PC-9 (cell line): ENCODE measurements at regions of chr7 and their contacts with region 1.

Region 1: GRCh38 chr7:130758429-130759056 is 24.5 kb upstream of the KLF14 start:
- DNase-seq: peak in 1 of 2 experiments; percentile 50
- H3K4me3 ChIP-seq: no peak overlapping the region
- H3K27ac ChIP-seq: no peak overlapping the region
- H3K4me1 ChIP-seq: no peaks in the 10 kb centered on the region
- H3K27me3 ChIP-seq: no peaks in the 10 kb centered on the region
- CTCF ChIP-seq: peak; percentile 95

Region 2: DNA sequence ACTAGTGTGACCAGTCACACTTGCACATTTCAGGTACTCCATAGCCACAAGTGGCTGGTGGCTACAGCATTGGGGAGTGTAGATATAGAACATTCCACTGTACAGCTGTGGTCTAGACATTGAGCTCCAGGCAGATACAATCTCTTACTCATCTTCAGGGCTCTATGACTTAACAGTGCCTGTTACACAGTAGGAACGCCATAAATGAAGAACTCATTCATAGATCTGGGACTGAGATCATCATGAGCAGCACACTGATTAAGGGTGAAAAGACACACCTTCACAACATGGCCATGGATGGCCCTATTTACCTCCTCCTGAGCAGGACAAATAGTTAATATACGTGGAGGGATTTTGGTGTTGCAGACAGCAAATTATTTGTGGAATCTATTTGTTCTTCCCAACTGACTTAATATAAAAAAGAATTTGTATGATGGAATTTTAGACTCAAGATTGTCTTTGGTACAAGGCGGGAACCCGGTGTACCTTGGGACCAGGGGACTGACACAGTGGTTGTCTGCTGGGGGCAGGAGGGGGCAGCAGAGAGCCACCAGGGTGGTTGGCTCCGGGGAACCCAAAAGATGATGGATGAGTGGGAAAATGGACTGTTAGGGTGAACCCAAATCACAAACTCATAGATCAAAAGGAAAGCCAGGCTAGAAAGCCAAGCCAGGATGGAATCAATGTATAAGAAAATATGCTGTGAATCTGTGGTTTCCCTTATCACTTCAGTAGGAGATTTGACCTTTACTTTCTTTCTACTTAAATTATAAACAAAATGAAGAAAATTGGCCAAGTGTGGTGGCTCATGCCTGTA is 516.1 kb before region 1 on chr7:
- CTCF ChIA-PET with region 1: no interaction called
- POLR2A ChIA-PET with region 1: no interaction called
- intact Hi-C with region 1: loop called (anchors 5 kb)
- DNase-seq: peak; percentile 38 to 48
- H3K4me3 ChIP-seq: no peak overlapping the region
- H3K27ac ChIP-seq: no peak overlapping the region
- H3K4me1 ChIP-seq: no peaks in the 10 kb centered on the region
- H3K27me3 ChIP-seq: no peaks in the 10 kb centered on the region
- CTCF ChIP-seq: peak; percentile 95

Region 3: GRCh38 chr7:130662426-130662825 is 96.1 kb before region 1 on chr7:
- CTCF ChIA-PET with region 1: interaction called, 12 read pairs
- POLR2A ChIA-PET with region 1: interaction called, 5 read pairs
- intact Hi-C with region 1: no loop called
- DNase-seq: no peak
- H3K4me3 ChIP-seq: no peak overlapping the region
- H3K27ac ChIP-seq: no peak overlapping the region
- H3K4me1 ChIP-seq: peaks cover under 1% of the 10 kb centered on the region; the same call in 1 of the 2 replicates
- H3K27me3 ChIP-seq: no peaks in the 10 kb centered on the region
- CTCF ChIP-seq: no peak

Region 4: DNA sequence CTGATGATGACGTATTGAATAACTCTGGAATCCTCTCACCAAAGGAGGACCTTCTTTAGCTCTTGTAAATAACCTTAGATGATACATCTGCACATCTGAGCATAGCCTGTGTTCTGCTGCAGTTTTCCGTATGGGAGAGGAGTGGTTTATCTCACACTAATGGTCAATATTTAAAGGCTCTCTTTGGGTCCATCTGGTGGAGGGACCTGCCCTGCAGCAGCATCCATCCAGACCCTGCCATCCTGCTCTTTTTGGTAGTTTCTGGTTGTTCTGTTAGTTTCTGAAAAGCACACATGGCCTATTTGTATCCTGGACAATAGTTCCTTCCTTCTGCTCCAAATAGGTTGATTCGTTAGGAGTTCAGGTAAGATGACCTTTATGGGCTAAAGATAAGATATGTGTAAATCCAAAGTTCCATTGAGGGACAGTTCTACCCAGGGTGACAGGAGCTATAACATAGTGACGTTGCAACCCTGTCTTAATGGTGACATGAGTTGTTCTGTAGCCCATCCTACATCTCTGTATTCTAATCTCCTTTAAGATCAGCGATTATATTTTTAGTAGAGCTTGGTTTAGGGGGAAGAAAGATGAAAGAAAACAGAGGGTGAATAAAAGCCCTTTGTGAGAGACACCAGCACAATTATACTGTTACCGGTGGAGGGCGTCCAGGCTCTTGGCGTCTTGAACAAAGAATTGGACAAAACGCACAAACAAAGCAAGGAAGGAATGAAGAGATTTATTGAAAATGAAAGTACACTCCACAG is 35.5 kb after region 1 on chr7:
- CTCF ChIA-PET with region 1: interaction called, 12 read pairs
- POLR2A ChIA-PET with region 1: no interaction called
- intact Hi-C with region 1: no loop called
- DNase-seq: peak in 1 of 2 experiments; percentile 18
- H3K4me3 ChIP-seq: no peak overlapping the region
- H3K27ac ChIP-seq: no peak overlapping the region
- H3K4me1 ChIP-seq: no peaks in the 10 kb centered on the region
- H3K27me3 ChIP-seq: no peaks in the 10 kb centered on the region
- CTCF ChIP-seq: no peak